ENCODE measurements at regions of chr4 and their contacts with region 1.

Region 1: GRCh38 chr4:166165829-166166420 is 292.9 kb downstream of the TLL1 start:
- DNase-seq: no peak
- H3K4me3 ChIP-seq: no peak overlapping the region
- H3K27ac ChIP-seq: no peak overlapping the region
- H3K4me1 ChIP-seq: no peaks in the 10 kb centered on the region
- H3K27me3 ChIP-seq: no peaks in the 10 kb centered on the region
- CTCF ChIP-seq: peak; percentile 36 to 68 (median 67)

Region 2: GRCh38 chr4:166594326-166594946 is 428.5 kb after region 1 on chr4:
- intact Hi-C with region 1: loop called (anchors 1 kb)
- DNase-seq: no peak
- H3K4me3 ChIP-seq: no peak overlapping the region
- H3K27ac ChIP-seq: no peak overlapping the region
- H3K4me1 ChIP-seq: no peaks in the 10 kb centered on the region
- H3K27me3 ChIP-seq: no peaks in the 10 kb centered on the region
- CTCF ChIP-seq: peak in 2 of 3 experiments; percentile 51 to 56

Region 3: DNA sequence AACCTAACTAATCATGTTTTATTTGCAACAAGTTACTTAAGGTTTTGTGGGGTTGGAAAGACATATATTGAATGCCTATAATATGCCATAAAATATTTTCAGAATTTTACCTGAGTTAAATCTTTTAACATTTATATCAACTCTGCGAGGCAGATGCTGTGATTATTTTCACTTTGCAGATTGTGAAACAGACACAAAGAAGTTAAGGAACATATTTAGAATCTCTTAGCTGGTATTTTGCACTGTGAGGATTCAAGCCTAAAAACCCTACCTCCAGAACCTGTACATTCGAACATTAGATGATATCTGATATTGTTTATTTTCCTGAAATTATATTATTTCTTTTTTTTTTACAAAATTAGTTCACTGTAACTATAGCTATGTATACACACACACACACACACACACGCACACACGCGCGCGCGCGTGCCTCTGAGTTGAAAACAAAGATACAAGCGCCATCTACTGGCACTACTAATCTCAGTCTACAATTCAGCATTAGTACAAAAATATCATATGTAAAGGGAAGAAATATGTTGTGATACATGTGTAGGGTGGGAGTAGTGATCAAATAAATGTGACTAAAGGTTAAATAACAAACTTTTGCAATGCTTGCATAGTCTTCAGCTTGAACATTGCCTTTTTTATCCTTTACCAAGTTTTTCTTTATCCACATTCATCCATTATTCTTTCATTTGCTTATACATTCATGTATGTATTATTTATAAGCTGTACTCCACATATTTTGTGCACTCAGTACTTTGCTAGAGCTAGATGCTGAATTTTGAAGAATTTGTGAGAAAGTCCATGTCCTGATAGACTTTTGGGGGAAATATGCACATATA is 1987.9 kb after region 1 on chr4:
- intact Hi-C with region 1: loop called (anchors 5 kb)
- DNase-seq: peak; percentile 14 to 77
- H3K4me3 ChIP-seq: peak overlapping the region; percentile 32 to 33
- H3K27ac ChIP-seq: no peak overlapping the region
- H3K4me1 ChIP-seq: no peaks in the 10 kb centered on the region
- H3K27me3 ChIP-seq: no peaks in the 10 kb centered on the region
- CTCF ChIP-seq: peak in 2 of 3 experiments; percentile 36 to 56